Thyroid gland (tissue), 4 donors: ENCODE measurements at regions of chr10 and their contacts with region 1.

Region 1: GRCh38 chr10:63465293-63466143 is at the start of gene JMJD1C:
- DNase-seq: peak; percentile 79 to 83
- H3K4me3 ChIP-seq: peak within 1 kb of the TSS; percentile 57 to 100 (median 88)
- H3K27ac ChIP-seq: peak within 1 kb of the TSS; percentile 94 to 99 (median 99)
- H3K4me1 ChIP-seq: peaks cover 0 to 5% of the 10 kb centered on the region in 2 donors
- H3K27me3 ChIP-seq: no peaks in the 10 kb centered on the region
- CTCF ChIP-seq: no peak
- POLR2A ChIP-seq: peak in 1 of 2 donors; percentile 84
- total RNA-seq, gene JMJD1C: 120 to 168 (median 136) TPM

Region 2: GRCh38 chr10:63273580-63273979 is 191.9 kb before region 1 on chr10:
- intact Hi-C with region 1: loop called (anchors 10 kb)
- DNase-seq: no peak
- H3K4me3 ChIP-seq: no peak overlapping the region
- H3K27ac ChIP-seq: peak overlapping the region; percentile 7 to 40 (median 11)
- H3K4me1 ChIP-seq: peaks cover 9 to 28% of the 10 kb centered on the region in 2 donors
- H3K27me3 ChIP-seq: no peaks in the 10 kb centered on the region
- CTCF ChIP-seq: no peak
- POLR2A ChIP-seq: no peak

Region 3: GRCh38 chr10:63515002-63515763 is 49.7 kb after region 1 on chr10:
- intact Hi-C with region 1: loop called (anchors 10 kb)
- DNase-seq: no peak
- H3K4me3 ChIP-seq: no peak overlapping the region
- H3K27ac ChIP-seq: peak overlapping the region; percentile 34 to 75 (median 69)
- H3K4me1 ChIP-seq: peaks cover 3 to 8% of the 10 kb centered on the region in 2 donors
- H3K27me3 ChIP-seq: no peaks in the 10 kb centered on the region
- CTCF ChIP-seq: no peak
- POLR2A ChIP-seq: no peak

Region 4: GRCh38 chr10:63554657-63555056 is 89.1 kb after region 1 on chr10:
- intact Hi-C with region 1: no loop called
- DNase-seq: peak; percentile 47 to 48
- H3K4me3 ChIP-seq: no peak overlapping the region
- H3K27ac ChIP-seq: peak overlapping the region in 1 of 3 donors; percentile 6
- H3K4me1 ChIP-seq: peaks cover 22% of the 10 kb centered on the region in 2 donors
- H3K27me3 ChIP-seq: no peaks in the 10 kb centered on the region
- CTCF ChIP-seq: no peak
- POLR2A ChIP-seq: no peak

Region 5: DNA sequence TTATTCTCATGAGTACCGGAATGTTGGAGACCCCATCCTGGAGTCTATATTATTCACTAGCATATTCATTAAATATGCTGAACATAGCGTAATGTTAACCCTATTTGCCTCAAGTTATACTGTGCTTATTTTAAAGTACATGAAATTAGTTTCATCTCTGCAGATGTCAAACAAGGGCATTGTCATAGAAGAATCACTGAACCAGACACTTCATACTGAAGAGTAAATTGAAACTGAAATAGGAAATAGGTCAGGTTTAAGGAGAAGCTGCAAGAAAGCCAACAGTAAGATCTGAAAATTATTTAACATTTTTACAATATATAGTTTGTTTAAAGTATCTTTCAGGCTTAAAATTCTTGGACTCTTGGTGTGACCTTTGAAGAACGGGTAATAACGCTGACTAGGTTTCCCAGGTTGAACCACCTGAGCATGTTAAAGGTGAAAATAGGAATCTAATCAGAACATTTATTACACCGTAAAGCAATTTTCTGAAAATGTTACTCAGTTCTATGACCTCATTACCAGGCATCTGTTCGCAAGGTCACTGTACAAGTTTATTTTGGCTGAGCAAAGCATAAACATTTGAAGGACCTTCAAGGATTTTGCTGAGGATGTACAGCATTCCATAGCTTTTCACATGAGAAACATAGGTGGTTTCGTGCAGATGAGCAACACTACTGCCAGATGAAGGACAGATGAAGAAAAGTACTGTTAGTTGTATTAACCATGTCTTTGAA is 138.4 kb after region 1 on chr10:
- intact Hi-C with region 1: no loop called
- DNase-seq: no peak
- H3K4me3 ChIP-seq: no peak overlapping the region
- H3K27ac ChIP-seq: peak overlapping the region in 2 of 3 donors; percentile 29 to 30
- H3K4me1 ChIP-seq: peaks cover 0 to 4% of the 10 kb centered on the region in 2 donors
- H3K27me3 ChIP-seq: no peaks in the 10 kb centered on the region
- CTCF ChIP-seq: no peak
- POLR2A ChIP-seq: no peak